PC-9 (cell line): ENCODE measurements at regions of chr4 and their contacts with region 1.

Region 1: GRCh38 chr4:113849771-113850170 is 88.2 kb upstream of the CAMK2D start:
- DNase-seq: no peak
- H3K4me3 ChIP-seq: no peak overlapping the region
- H3K27ac ChIP-seq: no peak overlapping the region
- H3K4me1 ChIP-seq: no peaks in the 10 kb centered on the region
- H3K27me3 ChIP-seq: no peaks in the 10 kb centered on the region
- CTCF ChIP-seq: no peak

Region 2: GRCh38 chr4:113837397-113837796 is 12.4 kb before region 1 on chr4:
- CTCF ChIA-PET with region 1: no interaction called
- POLR2A ChIA-PET with region 1: interaction called, 11 read pairs
- intact Hi-C with region 1: no loop called
- DNase-seq: peak in 1 of 2 experiments; percentile 42
- H3K4me3 ChIP-seq: no peak overlapping the region
- H3K27ac ChIP-seq: peak overlapping the region; percentile 41; the same call in 1 of the 2 replicates
- H3K4me1 ChIP-seq: no peaks in the 10 kb centered on the region
- H3K27me3 ChIP-seq: no peaks in the 10 kb centered on the region
- CTCF ChIP-seq: no peak